Left ventricle myocardium inferior (tissue), 1 donor: ENCODE measurements at regions of chr1 and their contacts with region 1.

Region 1: DNA sequence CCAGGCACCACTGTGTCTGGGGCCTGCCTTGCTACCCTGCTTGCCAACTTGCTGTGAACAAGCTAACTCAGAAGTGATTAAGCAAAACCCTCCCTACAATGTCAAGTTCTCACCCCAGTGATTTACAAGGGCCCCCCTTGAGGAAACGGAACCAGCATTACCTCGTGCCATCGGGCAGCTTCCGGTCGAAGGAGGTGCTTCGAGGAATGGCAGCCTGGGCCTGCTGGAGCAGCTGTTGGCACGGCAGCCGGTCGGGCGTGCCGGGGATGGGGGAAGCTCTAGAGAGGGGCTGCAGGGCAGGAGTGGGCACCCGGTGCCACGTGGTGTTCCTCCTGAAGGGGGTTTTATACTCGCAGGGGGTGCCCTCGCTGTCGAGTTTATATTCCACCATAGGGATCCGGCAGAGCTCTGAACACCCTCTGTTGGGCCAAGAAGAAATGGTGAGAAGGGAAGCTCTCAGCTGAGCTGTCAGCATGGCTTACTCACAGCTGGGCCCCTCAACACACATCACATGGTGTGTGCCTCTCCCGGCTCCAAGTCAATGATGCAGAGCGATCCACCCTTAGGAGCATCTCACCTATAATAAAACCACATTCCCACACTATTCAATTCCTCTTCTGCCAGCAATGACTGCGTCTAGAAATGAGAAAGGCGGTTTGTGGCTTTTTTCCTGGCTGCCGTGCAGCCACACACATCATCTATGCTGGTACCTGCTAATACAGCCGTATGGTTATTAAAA is 184.4 kb downstream of the SIPA1L2 start:
- DNase-seq: no peak
- H3K4me3 ChIP-seq: no peak overlapping the region
- H3K27ac ChIP-seq: no peak overlapping the region
- H3K4me1 ChIP-seq: peaks cover 35% of the 10 kb centered on the region
- H3K27me3 ChIP-seq: no peaks in the 10 kb centered on the region
- CTCF ChIP-seq: no peak

Region 2: DNA sequence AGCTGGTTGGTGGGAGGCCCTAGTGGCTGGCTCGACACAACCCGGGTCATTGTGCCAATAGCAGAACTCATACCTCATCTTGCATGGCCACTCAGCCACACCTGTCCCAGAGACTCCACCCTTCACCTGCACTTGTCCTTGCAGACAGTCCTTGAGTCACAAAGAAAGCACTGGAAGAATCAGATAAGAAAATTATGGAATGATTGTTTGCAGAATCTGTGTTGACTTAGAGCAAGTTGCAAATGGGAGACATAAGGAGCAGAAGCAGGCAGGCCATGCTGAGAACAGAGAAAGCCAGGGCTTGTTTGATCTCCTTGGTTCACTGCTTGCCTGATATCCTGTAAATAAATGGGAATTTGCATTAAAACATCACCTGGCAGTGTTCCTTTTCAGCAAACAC is 123.3 kb before region 1 on chr1:
- intact Hi-C with region 1: loop called (anchors 5 kb)
- DNase-seq: no peak
- H3K4me3 ChIP-seq: no peak overlapping the region
- H3K27ac ChIP-seq: no peak overlapping the region
- H3K4me1 ChIP-seq: peaks cover 12% of the 10 kb centered on the region
- H3K27me3 ChIP-seq: no peaks in the 10 kb centered on the region
- CTCF ChIP-seq: no peak

Region 3: GRCh38 chr1:232353001-232353400 is 92.5 kb before region 1 on chr1:
- intact Hi-C with region 1: no loop called
- DNase-seq: no peak
- H3K4me3 ChIP-seq: no peak overlapping the region
- H3K27ac ChIP-seq: no peak overlapping the region
- H3K4me1 ChIP-seq: peaks cover 18% of the 10 kb centered on the region
- H3K27me3 ChIP-seq: no peaks in the 10 kb centered on the region
- CTCF ChIP-seq: no peak